Psoas muscle (tissue), 8 donors: ENCODE measurements at regions of chr7 and their contacts with region 1.

Region 1: DNA sequence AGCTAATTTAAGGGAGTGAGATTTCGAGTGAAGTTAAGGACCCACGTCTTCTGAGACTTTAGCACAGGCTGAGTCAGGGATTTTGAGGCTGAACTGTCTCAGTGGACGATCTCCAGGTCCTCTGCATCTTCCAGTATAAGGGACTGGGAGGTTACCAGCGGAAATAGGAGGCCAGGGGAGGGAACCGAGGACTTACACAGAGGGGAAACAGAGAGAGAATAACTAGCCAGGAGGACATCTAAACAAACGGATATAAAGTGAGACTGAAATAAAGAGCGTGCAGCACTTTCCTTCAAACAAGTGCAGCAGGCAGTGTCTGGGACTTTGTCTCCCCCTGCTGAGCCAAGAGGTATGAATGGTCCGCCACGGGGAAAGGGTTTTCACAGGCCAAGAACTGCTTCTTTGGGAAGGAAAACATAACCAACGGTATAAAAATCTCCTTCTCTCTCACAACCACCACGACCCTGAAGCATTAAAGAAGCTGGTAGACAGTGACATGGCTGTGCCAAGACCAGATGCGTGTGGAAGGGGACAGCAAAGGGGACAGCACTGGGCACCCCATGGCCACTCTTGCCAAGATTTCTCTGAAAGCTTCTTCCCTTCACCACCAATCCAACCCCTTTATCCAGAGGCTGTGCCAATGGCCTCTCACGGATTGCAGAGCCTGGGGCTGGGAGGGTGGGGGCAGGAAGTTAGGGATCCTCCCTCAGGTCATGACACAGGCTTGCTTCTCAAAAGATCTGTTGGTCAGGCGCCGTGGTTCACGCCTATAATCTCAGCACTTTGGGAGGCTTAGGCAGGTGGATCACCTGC is 72.0 kb downstream of the SLC37A3 start:
- DNase-seq: peak; percentile 31 to 60
- ATAC-seq: peak; percentile 65 to 91 (median 79)
- H3K4me3 ChIP-seq: peak overlapping the region; percentile 25
- H3K27ac ChIP-seq: no peak overlapping the region
- H3K4me1 ChIP-seq: no peaks in the 10 kb centered on the region
- H3K27me3 ChIP-seq: no peaks in the 10 kb centered on the region
- CTCF ChIP-seq: peak; percentile 66

Region 2: DNA sequence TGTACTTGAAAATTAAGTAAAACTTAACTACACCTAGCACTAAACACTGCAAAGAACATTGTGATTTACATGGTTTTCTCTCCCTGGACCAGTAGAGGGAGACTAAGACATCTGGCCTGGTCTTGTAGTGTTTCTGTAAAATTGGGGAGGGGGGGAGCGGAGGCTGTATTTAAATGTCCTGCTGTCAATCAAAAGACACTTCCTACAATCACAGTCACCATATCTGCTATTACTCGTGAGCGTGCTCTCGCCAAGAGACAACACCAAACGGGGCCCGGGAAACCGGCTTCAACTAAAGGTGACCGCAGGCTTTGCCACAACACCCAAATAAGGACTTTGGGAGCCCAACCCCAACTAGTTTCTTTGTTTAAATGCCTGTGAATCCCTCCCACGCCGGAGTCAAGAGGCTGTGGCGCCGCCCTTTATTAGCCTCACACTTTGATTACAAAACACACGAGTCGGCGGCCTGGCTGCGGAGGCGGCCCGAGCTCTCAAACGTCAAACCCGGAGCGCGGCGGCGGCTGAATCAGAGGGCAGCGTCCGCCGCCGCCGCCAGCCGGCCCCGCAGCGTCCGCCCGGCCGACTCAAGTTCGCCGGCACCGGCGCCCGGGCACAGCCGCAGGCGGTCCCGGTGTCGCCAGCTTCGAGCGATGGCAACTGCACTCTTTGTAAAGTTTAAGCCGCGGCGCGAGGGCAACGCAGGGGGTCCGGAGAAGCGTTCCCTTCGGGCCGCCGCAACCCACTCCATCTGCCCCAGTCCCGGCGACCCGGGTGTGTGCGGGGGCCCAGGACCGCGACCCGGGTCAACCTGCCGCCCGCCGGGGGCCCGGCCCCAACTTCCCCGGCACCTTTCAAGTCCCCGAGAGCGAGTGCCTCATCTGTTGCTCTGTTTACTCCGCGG is 150.9 kb before region 1 on chr7:
- intact Hi-C with region 1: loop called (anchors 5 to 10 kb)
- DNase-seq: peak; percentile 93 to 94
- ATAC-seq: peak; percentile 74 to 85 (median 80)
- H3K4me3 ChIP-seq: peak overlapping the region; percentile 93
- H3K27ac ChIP-seq: peak overlapping the region; percentile 99
- H3K4me1 ChIP-seq: peaks cover 19% of the 10 kb centered on the region
- H3K27me3 ChIP-seq: no peaks in the 10 kb centered on the region
- CTCF ChIP-seq: peak; percentile 67